ENCODE measurements at regions of chr18 and their contacts with region 1.

Region 1: GRCh38 chr18:35231052-35231451 is 9.8 kb upstream of the ZNF397 start:
- DNase-seq: peak; percentile 60
- H3K4me3 Mint-ChIP-seq: peak overlapping the region; percentile 49
- H3K27ac Mint-ChIP-seq: no peak overlapping the region
- H3K4me1 Mint-ChIP-seq: peaks cover 3% of the 10 kb centered on the region
- H3K27me3 Mint-ChIP-seq: peaks cover 6% of the 10 kb centered on the region

Region 2: GRCh38 chr18:34867520-34867919 is 363.5 kb before region 1 on chr18:
- intact Hi-C with region 1: loop called (anchors 10 kb)
- DNase-seq: no peak
- H3K4me3 Mint-ChIP-seq: no peak overlapping the region
- H3K27ac Mint-ChIP-seq: no peak overlapping the region
- H3K4me1 Mint-ChIP-seq: peaks cover 34% of the 10 kb centered on the region
- H3K27me3 Mint-ChIP-seq: peaks cover 12% of the 10 kb centered on the region

Region 3: GRCh38 chr18:35355140-35355618 is 124.1 kb after region 1 on chr18:
- intact Hi-C with region 1: loop called (anchors 1 kb)
- DNase-seq: peak; percentile 31
- H3K4me3 Mint-ChIP-seq: no peak overlapping the region
- H3K27ac Mint-ChIP-seq: no peak overlapping the region
- H3K4me1 Mint-ChIP-seq: peaks cover 2% of the 10 kb centered on the region
- H3K27me3 Mint-ChIP-seq: no peaks in the 10 kb centered on the region

Region 4: DNA sequence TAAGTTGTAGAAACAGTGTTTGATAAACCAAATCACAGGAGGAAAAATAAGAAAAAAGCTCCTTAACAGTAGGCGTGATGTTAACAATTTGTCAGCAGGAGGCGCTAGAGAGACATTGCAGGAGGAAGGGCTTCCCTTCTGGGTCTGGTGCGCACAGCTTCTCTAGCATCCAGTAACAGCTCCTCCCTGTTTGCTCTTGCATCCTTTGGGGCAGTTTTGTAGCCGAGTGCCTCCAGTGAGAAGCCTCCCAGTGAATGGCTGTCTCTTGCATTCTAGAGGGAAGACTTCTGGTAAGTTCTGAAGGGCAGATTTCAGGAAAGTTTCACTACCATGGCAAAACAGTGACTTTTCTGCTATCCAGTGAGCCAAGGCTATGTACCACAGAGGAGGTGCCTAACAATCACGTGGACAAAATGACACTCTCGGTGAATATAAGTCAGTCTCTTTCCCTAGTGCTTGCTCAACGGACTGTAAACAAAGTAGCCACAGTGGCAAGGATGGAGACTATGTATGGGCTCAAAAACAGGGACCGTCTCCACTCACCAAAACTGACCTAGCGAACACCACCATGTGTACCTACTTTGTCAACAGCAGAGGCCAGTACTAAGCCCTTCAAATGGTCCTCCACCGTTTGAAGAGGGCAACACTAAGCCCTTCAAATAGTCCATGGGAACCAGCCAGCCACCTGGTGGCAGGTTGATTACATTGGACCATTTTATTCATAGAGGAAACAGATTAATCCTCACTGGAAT is 155.7 kb after region 1 on chr18:
- intact Hi-C with region 1: loop called (anchors 5 kb)
- DNase-seq: peak; percentile 40
- H3K4me3 Mint-ChIP-seq: no peak overlapping the region
- H3K27ac Mint-ChIP-seq: no peak overlapping the region
- H3K4me1 Mint-ChIP-seq: peaks cover 5% of the 10 kb centered on the region
- H3K27me3 Mint-ChIP-seq: peaks cover 19% of the 10 kb centered on the region